AG04450 (cell line): ENCODE measurements at regions of chr19 and their contacts with region 1.

Region 1: GRCh38 chr19:38769635-38770211 is 3.6 kb downstream of the LGALS7 start:
- DNase-seq: peak; percentile 16
- H3K4me3 ChIP-seq: no peak overlapping the region
- H3K27ac ChIP-seq: no peak overlapping the region
- H3K27me3 ChIP-seq: no peaks in the 10 kb centered on the region
- CTCF ChIP-seq: peak; percentile 62

Region 2: DNA sequence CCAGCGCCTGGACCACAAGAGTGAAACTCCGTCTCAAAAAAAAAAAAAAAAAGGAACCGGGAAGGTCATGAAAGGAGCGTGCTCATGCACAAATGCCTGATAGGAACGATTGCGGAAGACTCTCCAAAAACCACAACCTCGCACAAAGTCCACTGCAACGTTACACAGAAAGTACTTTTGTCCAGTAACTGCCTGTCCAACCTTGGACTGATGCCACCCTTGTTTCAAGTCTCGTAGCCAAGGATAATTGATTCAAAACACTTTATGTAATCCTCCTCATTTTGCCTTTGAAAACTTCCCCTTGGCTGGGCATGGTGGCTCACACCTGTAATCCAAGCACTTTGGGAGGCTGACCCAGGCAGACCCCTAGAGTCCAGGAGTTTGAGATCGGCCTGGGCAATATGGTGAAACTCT is 10.1 kb before region 1 on chr19:
- CTCF ChIA-PET with region 1: interaction called, 10 read pairs
- POLR2A ChIA-PET with region 1: no interaction called
- DNase-seq: no peak
- H3K4me3 ChIP-seq: no peak overlapping the region
- H3K27ac ChIP-seq: no peak overlapping the region
- H3K27me3 ChIP-seq: no peaks in the 10 kb centered on the region
- CTCF ChIP-seq: no peak